GM12878 (cell line): ENCODE measurements at regions of chr18 and their contacts with region 1.

Region 1: GRCh38 chr18:49464718-49465598 is 4.5 kb upstream of the DYM start:
- DNase-seq: no peak
- ATAC-seq: no peak
- H3K4me3 ChIP-seq: no peak overlapping the region
- H3K27ac ChIP-seq: no peak overlapping the region
- H3K4me1 ChIP-seq: peaks cover 3% of the 10 kb centered on the region; the same call in 1 of the 2 replicates
- H3K27me3 ChIP-seq: no peaks in the 10 kb centered on the region
- CTCF ChIP-seq: peak in 1 of 3 experiments; percentile 38; a peak in 2 of 6 replicates
- EP300 ChIP-seq: no peak
- POLR2A ChIP-seq: no peak
- RAD21 ChIP-seq: peak; percentile 28

Region 2: GRCh38 chr18:49611316-49611715 is 146.4 kb after region 1 on chr18:
- CTCF ChIA-PET with region 1: no interaction called
- POLR2A ChIA-PET with region 1: interaction called, 10 read pairs
- RAD21 ChIA-PET with region 1: no interaction called
- SMC1A ChIA-PET with region 1: no interaction called
- in situ Hi-C with region 1: no loop called
- intact Hi-C with region 1: no loop called
- DNase-seq: no peak
- ATAC-seq: no peak
- H3K4me3 ChIP-seq: no peak overlapping the region
- H3K27ac ChIP-seq: no peak overlapping the region
- H3K4me1 ChIP-seq: peaks cover 10% of the 10 kb centered on the region
- H3K27me3 ChIP-seq: no peaks in the 10 kb centered on the region; a peak in 1 of 4 replicates
- CTCF ChIP-seq: no peak
- EP300 ChIP-seq: no peak
- POLR2A ChIP-seq: no peak
- RAD21 ChIP-seq: no peak